ENCODE measurements at regions of chr9 and their contacts with region 1.

Region 1: GRCh38 chr9:19408693-19409400 is at the start of gene ACER2:
- DNase-seq: peak; percentile 92
- H3K4me3 Mint-ChIP-seq: peak within 1 kb of the TSS; percentile 95
- H3K27ac Mint-ChIP-seq: peak within 1 kb of the TSS; percentile 72
- H3K4me1 Mint-ChIP-seq: peaks cover 22% of the 10 kb centered on the region
- H3K27me3 Mint-ChIP-seq: no peaks in the 10 kb centered on the region
- CTCF ChIP-seq: no peak
- total RNA-seq, gene ACER2: 7.6 and 10.0 TPM in 2 replicates

Region 2: DNA sequence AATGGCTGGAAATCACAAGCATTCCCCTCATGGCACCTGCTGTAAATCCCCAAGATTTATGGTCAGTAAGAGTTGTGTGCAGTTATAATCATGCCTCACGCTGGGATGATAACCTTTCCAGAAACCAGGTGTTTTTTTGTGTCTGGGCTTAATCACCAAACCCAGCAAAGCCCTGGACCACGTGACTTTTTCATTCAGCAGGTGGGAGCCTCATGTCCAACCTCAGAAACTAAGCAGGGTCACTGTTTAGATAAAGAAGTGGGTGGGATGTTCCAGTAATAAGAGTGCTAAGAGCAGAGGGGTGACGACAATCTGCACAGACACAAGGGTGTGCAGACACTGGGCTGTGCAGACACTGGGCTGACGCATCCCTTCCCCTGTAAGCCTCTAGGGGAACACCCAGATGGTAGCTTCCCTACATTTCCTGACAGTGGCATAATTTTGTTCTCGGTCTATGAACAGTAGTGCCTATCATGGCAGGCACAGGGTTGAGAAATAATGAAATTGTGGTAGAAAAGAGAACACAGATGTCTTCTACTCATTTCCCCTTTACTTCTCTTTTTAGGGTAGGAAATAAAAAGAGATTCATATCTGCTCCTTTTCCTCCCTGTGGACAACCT is 461.0 kb before region 1 on chr9:
- CTCF ChIA-PET with region 1: no interaction called
- intact Hi-C with region 1: no loop called
- DNase-seq: no peak
- H3K4me3 Mint-ChIP-seq: no peak overlapping the region
- H3K27ac Mint-ChIP-seq: no peak overlapping the region
- H3K4me1 Mint-ChIP-seq: no peaks in the 10 kb centered on the region
- H3K27me3 Mint-ChIP-seq: peaks cover 89% of the 10 kb centered on the region
- CTCF ChIP-seq: no peak

Region 3: DNA sequence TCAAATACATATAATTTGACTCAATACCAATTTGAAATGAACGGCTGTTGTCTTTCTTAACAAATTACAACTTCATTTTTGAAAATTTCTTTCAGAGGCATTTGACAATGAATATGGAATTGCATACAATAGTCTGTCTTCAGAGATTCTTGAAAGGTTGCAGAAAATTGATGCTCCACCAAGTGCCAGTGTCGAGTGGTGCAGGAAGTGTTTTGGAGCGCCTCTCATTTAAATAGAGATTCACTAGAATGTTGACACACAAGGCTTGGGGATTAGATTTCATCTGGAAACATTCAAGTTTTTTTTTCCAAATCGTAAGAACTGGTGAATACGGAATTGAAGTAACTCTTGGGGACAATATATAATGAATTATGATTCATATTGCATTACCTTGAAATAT is 36.9 kb before region 1 on chr9:
- CTCF ChIA-PET with region 1: no interaction called
- intact Hi-C with region 1: loop called (anchors 5 kb)
- DNase-seq: no peak
- H3K4me3 Mint-ChIP-seq: no peak overlapping the region
- H3K27ac Mint-ChIP-seq: no peak overlapping the region
- H3K4me1 Mint-ChIP-seq: peaks cover 9% of the 10 kb centered on the region
- H3K27me3 Mint-ChIP-seq: no peaks in the 10 kb centered on the region
- CTCF ChIP-seq: no peak

Measured in Calu3 (cell line).